Calu3 (cell line): ENCODE measurements at regions of chr4 and their contacts with region 1.

Region 1: GRCh38 chr4:151611960-151612359 is 148.8 kb downstream of the GATB start:
- DNase-seq: no peak
- H3K4me3 Mint-ChIP-seq: no peak overlapping the region
- H3K27ac Mint-ChIP-seq: no peak overlapping the region
- H3K4me1 Mint-ChIP-seq: no peaks in the 10 kb centered on the region
- H3K27me3 Mint-ChIP-seq: no peaks in the 10 kb centered on the region
- CTCF ChIP-seq: no peak

Region 2: GRCh38 chr4:151117371-151117962 is 494.5 kb before region 1 on chr4:
- CTCF ChIA-PET with region 1: no interaction called
- intact Hi-C with region 1: loop called (anchors 1 kb)
- DNase-seq: peak; percentile 58
- H3K4me3 Mint-ChIP-seq: no peak overlapping the region
- H3K27ac Mint-ChIP-seq: no peak overlapping the region
- H3K4me1 Mint-ChIP-seq: no peaks in the 10 kb centered on the region
- H3K27me3 Mint-ChIP-seq: no peaks in the 10 kb centered on the region
- CTCF ChIP-seq: peak; percentile 46